Astrocyte of the cerebellum (primary cell): ENCODE measurements at regions of chr18 and their contacts with region 1.

Region 1: DNA sequence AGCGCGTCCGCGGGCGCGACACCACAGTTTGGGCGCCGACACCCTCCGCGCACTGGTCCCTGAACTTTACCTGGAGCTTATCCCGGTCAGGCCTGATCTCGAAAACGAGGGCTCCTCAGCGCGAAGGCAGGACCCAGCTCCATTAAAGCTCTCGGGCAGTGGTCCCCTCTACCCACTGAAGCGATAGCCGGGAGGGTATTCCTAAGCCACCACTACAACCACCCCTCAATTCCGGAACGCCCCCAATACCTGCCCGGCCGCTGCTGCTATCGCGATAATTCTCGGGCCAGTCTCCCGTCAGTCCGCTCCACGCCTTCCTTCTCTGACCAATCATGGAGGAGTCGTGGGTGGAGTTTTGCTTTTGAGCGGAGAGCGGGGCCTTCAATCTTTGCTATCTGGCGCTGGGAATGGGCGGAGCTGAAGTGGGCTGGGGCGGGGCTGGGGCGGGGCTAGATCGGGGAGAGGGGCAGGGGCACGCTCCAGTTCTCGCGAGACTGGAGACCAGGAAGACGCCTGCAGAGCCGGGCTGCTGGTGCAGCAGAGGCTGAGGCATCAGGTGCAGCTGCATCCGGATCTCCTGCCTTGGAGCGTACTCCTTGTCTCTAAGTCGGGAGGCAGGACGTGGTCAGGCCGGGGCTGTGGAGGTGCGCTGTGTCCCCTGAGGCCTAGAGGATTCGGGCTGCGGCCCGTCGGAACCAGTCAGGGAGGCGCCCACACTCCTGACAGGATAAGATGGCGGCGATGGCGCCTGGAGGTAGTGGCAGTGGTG is at the starts of genes PIGN and RELCH:
- DNase-seq: peak; percentile 98
- H3K4me3 ChIP-seq: peak within 1 kb of the TSS; percentile 99
- CTCF ChIP-seq: no peak

Region 2: DNA sequence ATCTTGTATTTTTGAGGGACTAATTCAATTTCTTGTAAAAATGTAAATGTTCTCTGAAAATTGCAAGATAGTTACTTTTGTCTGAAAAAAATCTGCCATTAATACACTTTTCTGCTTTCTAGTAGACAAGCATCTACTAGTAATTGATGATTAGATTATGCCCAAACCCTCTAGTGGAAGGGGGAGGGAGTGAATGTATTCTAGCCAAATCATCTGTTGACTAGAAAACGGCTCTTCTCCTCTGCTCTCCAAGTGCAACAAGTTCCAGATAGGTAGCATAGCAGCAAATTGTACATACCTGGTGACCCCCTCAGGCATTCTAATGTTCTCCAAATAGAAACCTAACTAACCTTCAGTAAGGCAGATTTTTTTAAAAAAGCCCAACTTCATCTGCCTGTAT is 58.7 kb after region 1 on chr18:
- in situ Hi-C with region 1: no loop called
- DNase-seq: no peak
- H3K4me3 ChIP-seq: no peak overlapping the region
- CTCF ChIP-seq: no peak

Region 3: GRCh38 chr18:62982600-62983251 is 795.8 kb after region 1 on chr18:
- in situ Hi-C with region 1: loop called (anchors 25 kb)
- DNase-seq: peak; percentile 40
- H3K4me3 ChIP-seq: no peak overlapping the region
- CTCF ChIP-seq: peak; percentile 81